Activated CD8-positive, alpha-beta T cell treated with anti-CD3 and anti-CD28 coated beads for 36 hours (primary cell): ENCODE measurements at regions of chr1 and their contacts with region 1.

Region 1: GRCh38 chr1:25338188-25338981 is at the start of gene TMEM50A:
- DNase-seq: peak; percentile 92
- ATAC-seq: peak; percentile 81
- H3K4me3 Mint-ChIP-seq: peak within 1 kb of the TSS; percentile 93
- H3K27ac Mint-ChIP-seq: peak within 1 kb of the TSS; percentile 96
- H3K4me1 Mint-ChIP-seq: peaks cover 32% of the 10 kb centered on the region
- H3K27me3 Mint-ChIP-seq: no peaks in the 10 kb centered on the region
- CTCF ChIP-seq: no peak
- total RNA-seq, gene TMEM50A: 88.5 to 89.3 TPM

Region 2: GRCh38 chr1:25247024-25247828 is 91.2 kb before region 1 on chr1 and contains the start of gene RSRP1:
- CTCF ChIA-PET with region 1: no interaction called
- POLR2A ChIA-PET with region 1: interaction called, 3 read pairs
- intact Hi-C with region 1: loop called (anchors 5 kb)
- DNase-seq: peak; percentile 100
- ATAC-seq: peak; percentile 91
- H3K4me3 Mint-ChIP-seq: peak within 1 kb of the TSS; percentile 97
- H3K27ac Mint-ChIP-seq: peak within 1 kb of the TSS; percentile 98
- H3K4me1 Mint-ChIP-seq: peaks cover 43% of the 10 kb centered on the region
- H3K27me3 Mint-ChIP-seq: no peaks in the 10 kb centered on the region
- CTCF ChIP-seq: no peak
- total RNA-seq, gene RSRP1: 124 to 139 TPM

Region 3: GRCh38 chr1:25369241-25369640 is 30.9 kb after region 1 on chr1:
- CTCF ChIA-PET with region 1: no interaction called
- POLR2A ChIA-PET with region 1: no interaction called
- intact Hi-C with region 1: no loop called
- DNase-seq: no peak
- ATAC-seq: no peak
- H3K4me3 Mint-ChIP-seq: no peak overlapping the region
- H3K27ac Mint-ChIP-seq: no peak overlapping the region
- H3K4me1 Mint-ChIP-seq: no peaks in the 10 kb centered on the region
- H3K27me3 Mint-ChIP-seq: no peaks in the 10 kb centered on the region
- CTCF ChIP-seq: no peak